Head of caudate nucleus (tissue), 42 donors: ENCODE measurements at regions of chr22 and their contacts with region 1.

Region 1: GRCh38 chr22:21861851-21862250 is 5.6 kb downstream of the MAPK1 start:
- DNase-seq: no peak

Region 2: DNA sequence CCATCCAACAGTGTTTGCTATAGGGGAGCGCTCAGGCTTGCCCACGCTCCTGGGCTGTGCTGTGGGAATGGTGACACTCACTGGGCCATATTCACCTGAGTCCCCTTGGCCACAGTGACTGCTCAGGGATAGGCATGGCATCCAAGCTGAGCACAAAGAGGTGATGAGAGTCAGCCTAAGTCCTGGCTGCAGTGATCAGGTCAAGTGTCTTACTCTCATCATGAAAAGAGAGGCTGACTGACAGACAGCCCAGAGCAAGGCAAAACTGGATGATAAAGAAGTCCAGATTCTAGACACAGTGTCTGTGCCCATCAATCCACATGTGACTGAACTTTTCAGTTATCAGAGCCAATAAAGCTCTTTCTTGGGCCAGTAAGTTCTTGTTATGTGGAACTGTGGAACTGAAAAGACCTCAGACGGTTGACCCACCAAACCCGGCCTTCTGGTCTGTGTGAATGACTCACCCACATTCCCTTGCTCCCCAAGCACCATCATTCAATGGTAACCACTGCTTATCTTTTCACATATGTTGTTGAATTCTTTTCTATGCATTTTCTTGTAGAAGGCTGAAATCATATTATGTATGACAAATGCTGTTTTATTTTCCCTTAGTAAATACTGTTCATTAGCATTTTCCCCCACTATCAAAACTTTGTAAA is 83.0 kb before region 1 on chr22:
- intact Hi-C with region 1: no loop called
- DNase-seq: peak in 2 of 42 donors; percentile 20 to 22

Region 3: GRCh38 chr22:21829523-21829922 is 32.3 kb before region 1 on chr22:
- intact Hi-C with region 1: loop called (anchors 5 kb)
- DNase-seq: no peak